Activated T-helper 1 cell treated with anti-CD3 and anti-CD28 coated beads, Interleukin-12 subunit alpha, Interleukin-12 subunit beta, Interleukin-2, Interleukin-4 antibody, amounts not matched to agents 30 ng/mL and 10 ng/mL and 1 ng/mL, durations not matched to agents 14 hours and 24 hours and 36 hours (primary cell): ENCODE measurements at regions of chr18 and their contacts with region 1.

Region 1: GRCh38 chr18:61955644-61956043 is 62.8 kb upstream of the RNF152 start:
- DNase-seq: no peak
- H3K4me3 Mint-ChIP-seq: no peak overlapping the region
- H3K27ac Mint-ChIP-seq: no peak overlapping the region
- H3K4me1 Mint-ChIP-seq: peaks cover 49% of the 10 kb centered on the region
- H3K27me3 Mint-ChIP-seq: peaks cover 29% of the 10 kb centered on the region

Region 2: DNA sequence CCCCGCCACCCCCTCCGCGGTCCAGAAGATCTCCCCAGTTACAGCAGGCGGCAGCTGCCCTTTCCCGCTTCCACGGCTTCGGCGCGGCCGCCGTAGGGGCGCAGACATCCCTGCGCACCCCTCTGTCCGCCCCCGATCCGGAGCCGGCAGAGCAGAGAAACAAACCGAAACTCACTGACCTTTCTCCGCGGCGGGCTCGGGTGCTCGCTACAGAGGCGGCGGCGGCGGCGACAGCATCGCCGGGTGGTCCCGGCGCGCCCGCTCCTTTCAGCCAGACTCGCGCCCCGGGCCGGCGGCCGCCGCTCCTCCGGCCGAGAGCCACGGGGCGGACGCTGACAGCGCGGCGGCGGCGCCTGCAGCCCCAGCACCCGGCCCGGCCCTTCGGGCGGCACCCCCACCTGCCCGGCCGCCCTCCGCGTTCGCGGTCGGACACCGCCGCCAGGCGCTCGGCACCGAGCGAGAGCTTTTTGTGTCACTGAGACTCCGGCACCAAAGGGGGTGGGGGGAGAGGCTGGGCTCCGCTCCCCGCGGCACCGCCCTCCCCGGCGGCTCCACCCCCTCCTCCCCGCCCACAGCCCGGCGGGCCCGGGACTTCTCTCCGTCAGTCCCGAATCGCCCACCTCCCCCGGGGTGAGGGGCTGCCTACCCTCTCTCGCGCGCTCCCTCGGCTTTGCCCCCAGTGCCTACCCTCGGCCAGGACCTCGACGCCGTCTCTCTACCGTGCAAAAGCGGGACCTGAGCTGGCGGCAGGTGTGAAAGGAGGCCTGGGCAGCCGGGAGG is 61.5 kb before region 1 on chr18:
- intact Hi-C with region 1: loop called (anchors 1 kb)
- DNase-seq: peak; percentile 53
- H3K4me3 Mint-ChIP-seq: peak overlapping the region; percentile 82
- H3K27ac Mint-ChIP-seq: no peak overlapping the region
- H3K4me1 Mint-ChIP-seq: peaks cover 13% of the 10 kb centered on the region
- H3K27me3 Mint-ChIP-seq: peaks cover 65% of the 10 kb centered on the region

Region 3: GRCh38 chr18:61926532-61926931 is 29.1 kb before region 1 on chr18:
- intact Hi-C with region 1: loop called (anchors 1 kb)
- DNase-seq: peak; percentile 26
- H3K4me3 Mint-ChIP-seq: peak overlapping the region; percentile 63
- H3K27ac Mint-ChIP-seq: peak overlapping the region; percentile 74
- H3K4me1 Mint-ChIP-seq: peaks cover 40% of the 10 kb centered on the region
- H3K27me3 Mint-ChIP-seq: peaks cover 12% of the 10 kb centered on the region

Region 4: GRCh38 chr18:61972389-61973264 is 17.0 kb after region 1 on chr18:
- intact Hi-C with region 1: loop called (anchors 1 kb)
- DNase-seq: no peak
- H3K4me3 Mint-ChIP-seq: no peak overlapping the region
- H3K27ac Mint-ChIP-seq: peak overlapping the region; percentile 27
- H3K4me1 Mint-ChIP-seq: peaks cover 36% of the 10 kb centered on the region
- H3K27me3 Mint-ChIP-seq: peaks cover 2% of the 10 kb centered on the region

Region 5: DNA sequence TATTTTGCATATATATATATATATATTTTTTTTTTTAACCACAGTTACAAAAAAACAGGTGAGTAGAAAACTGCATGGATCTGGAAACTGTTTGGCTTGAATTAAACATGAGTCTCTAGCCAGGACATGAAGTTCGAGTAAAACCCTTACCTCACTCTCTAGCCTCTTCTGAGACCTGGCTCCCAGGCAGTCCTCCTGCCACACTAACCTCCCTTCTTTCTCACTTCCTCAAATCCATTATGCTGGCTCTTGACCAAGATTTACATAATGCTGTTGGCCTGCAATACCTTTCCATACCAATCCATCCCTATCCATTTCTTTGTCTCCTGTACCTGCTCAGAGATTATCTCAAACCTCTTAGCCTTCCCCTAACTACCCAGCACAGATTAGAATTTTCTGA is 197.2 kb after region 1 on chr18:
- intact Hi-C with region 1: no loop called
- DNase-seq: no peak
- H3K4me3 Mint-ChIP-seq: no peak overlapping the region
- H3K27ac Mint-ChIP-seq: no peak overlapping the region
- H3K4me1 Mint-ChIP-seq: no peaks in the 10 kb centered on the region
- H3K27me3 Mint-ChIP-seq: no peaks in the 10 kb centered on the region

Region 6: GRCh38 chr18:63148449-63149301 is 1193.0 kb after region 1 on chr18:
- intact Hi-C with region 1: no loop called
- DNase-seq: no peak
- H3K4me3 Mint-ChIP-seq: no peak overlapping the region
- H3K27ac Mint-ChIP-seq: peak overlapping the region; percentile 61
- H3K4me1 Mint-ChIP-seq: peaks cover 46% of the 10 kb centered on the region
- H3K27me3 Mint-ChIP-seq: no peaks in the 10 kb centered on the region